Cardiac septum (tissue), 1 donor: ENCODE measurements at regions of chr5 and their contacts with region 1.

Region 1: DNA sequence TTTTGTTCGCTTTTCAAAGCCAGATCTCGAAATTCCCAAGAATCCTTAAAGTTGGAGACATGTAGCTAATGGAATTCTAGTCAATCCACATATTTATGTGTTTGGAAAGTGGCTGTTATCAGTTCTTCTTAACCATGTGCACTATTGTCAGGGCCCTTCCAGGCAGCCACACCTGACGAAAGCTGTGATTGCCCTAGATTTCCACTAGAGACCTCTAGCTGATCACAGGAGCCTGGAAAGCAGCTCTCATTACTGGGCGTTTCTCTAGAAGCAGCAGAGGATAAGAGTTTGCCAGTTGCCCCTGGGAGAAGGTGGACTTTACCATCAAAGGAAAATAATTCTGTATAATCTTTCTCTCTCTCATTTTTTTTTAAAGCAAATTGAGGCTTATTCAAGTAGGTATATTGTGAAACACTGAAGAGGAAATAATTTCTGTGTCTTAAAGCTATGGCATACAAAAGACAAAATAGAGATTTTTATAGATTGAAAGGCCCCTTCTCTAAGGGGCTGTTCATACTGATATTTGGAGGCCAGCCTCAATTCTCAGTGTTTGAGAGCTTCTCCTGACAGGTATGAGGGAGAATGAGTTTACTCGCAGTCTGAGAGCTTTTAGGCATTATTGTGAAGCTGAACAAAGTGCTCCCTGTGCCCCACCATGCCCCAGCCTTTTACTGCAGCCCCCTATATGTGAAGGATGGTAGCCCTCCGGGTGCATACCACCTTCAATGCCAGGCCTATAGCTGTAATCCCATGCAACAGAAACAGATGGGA is 405.4 kb upstream of the ACTBL2 start:
- DNase-seq: no peak

Region 2: DNA sequence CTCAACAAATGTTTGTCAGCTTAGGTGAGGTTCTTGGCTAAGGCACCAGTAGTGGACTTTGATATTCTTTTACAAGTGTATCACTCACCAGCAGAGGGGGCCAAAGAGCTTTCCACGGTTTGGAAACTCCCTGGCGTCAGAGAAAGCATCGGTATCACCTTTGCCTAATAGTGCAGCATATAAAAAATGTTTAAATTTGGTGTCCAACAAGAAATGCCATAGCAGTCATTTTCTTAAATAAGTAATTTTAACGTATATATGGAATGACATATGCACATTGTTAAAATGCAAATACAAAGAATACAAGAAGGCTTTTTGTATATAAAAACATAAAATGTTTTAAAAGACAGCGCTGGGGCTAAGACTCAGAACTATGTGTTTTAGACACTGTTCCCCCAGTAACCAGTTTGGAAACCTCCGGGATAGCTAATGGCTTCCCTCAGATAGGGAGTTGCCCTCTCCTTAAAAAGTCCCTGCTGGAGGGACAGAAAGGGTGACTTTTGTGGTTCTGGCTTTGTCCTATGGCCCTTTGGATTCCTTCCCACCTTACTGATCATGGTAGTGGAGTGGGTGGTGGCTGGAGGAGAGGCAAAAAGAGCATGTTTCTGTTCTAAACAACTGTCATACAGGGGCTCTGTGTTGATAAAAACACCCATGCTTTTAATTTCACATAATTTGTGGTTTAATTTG is 589.6 kb before region 1 on chr5:
- intact Hi-C with region 1: loop called (anchors 5 kb)
- DNase-seq: peak; percentile 82

Region 3: GRCh38 chr5:58019614-58020013 is 131.6 kb after region 1 on chr5:
- intact Hi-C with region 1: no loop called
- DNase-seq: peak; percentile 83

Region 4: DNA sequence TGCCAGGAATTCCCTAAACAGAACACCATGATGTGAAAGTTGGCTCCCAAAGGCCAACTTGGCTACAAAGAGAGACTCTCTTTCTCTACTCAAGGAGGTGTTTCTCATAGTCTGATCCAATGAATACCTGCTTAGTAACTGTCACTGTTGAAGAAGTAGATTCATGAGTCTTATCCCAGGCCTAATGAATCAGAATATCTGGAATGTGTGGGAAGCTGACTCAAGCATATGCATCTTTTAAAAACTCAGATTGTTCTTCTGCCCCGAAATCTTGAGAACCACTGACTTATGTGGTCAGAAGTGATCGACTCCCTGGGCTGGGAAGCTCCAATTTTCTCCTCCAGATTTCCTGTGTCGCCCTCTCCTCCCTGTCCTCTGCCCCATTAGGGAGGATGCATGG is 226.3 kb after region 1 on chr5:
- intact Hi-C with region 1: no loop called
- DNase-seq: no peak

Region 5: DNA sequence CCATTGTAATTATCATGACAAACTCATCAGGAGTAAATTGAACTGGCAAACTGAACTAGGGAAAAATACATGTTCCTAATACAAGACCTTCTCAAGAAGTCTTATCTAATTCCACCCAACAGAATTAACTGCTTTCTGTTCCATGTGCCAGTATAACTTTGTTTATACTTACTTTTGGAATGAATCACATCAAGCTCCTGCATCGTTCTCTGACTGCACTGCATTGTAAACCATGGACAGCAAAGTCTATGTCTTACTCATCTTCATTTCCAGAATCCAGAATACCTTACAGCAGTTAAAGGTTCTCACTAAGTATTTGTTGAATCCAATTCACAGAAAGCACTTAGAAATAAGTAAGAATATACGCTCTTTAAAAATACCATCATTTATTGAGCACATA is 469.1 kb after region 1 on chr5:
- intact Hi-C with region 1: no loop called
- DNase-seq: no peak